ENCODE measurements at regions of chr12 and their contacts with region 1.

Region 1: GRCh38 chr12:96208801-96209549 is 14.8 kb downstream of the ELK3 start:
- DNase-seq: peak in 1 of 10 donors; percentile 14
- ATAC-seq: no peak
- H3K4me3 Mint-ChIP-seq: peak overlapping the region; percentile 7 to 93 (median 78)
- H3K27ac Mint-ChIP-seq: peak overlapping the region in 9 of 10 donors; percentile 47 to 90 (median 75)
- H3K4me1 Mint-ChIP-seq: peaks cover 49 to 97% (median 94%) of the 10 kb centered on the region in 4 donors
- H3K27me3 Mint-ChIP-seq: no peaks in the 10 kb centered on the region

Region 2: GRCh38 chr12:96194971-96195844 is 13.8 kb before region 1 on chr12:
- POLR2A ChIA-PET with region 1: interaction called, 45 read pairs
- DNase-seq: peak; percentile 43 to 85 (median 64)
- ATAC-seq: peak; percentile 74 to 75
- H3K4me3 Mint-ChIP-seq: peak overlapping the region; percentile 93 to 98 (median 96)
- H3K27ac Mint-ChIP-seq: peak overlapping the region; percentile 94 to 100 (median 97)
- H3K4me1 Mint-ChIP-seq: peaks cover 19 to 64% (median 59%) of the 10 kb centered on the region in 4 donors
- H3K27me3 Mint-ChIP-seq: no peaks in the 10 kb centered on the region